Panc1 (cell line): ENCODE measurements at regions of chr17 and their contacts with region 1.

Region 1: GRCh38 chr17:31926100-31926729 is 10.6 kb upstream of the SUZ12 start:
- DNase-seq: no peak
- ATAC-seq: no peak
- H3K4me3 ChIP-seq: no peak overlapping the region
- H3K27ac ChIP-seq: no peak overlapping the region
- H3K4me1 ChIP-seq: no peaks in the 10 kb centered on the region
- H3K27me3 ChIP-seq: no peaks in the 10 kb centered on the region
- CTCF ChIP-seq: no peak

Region 2: DNA sequence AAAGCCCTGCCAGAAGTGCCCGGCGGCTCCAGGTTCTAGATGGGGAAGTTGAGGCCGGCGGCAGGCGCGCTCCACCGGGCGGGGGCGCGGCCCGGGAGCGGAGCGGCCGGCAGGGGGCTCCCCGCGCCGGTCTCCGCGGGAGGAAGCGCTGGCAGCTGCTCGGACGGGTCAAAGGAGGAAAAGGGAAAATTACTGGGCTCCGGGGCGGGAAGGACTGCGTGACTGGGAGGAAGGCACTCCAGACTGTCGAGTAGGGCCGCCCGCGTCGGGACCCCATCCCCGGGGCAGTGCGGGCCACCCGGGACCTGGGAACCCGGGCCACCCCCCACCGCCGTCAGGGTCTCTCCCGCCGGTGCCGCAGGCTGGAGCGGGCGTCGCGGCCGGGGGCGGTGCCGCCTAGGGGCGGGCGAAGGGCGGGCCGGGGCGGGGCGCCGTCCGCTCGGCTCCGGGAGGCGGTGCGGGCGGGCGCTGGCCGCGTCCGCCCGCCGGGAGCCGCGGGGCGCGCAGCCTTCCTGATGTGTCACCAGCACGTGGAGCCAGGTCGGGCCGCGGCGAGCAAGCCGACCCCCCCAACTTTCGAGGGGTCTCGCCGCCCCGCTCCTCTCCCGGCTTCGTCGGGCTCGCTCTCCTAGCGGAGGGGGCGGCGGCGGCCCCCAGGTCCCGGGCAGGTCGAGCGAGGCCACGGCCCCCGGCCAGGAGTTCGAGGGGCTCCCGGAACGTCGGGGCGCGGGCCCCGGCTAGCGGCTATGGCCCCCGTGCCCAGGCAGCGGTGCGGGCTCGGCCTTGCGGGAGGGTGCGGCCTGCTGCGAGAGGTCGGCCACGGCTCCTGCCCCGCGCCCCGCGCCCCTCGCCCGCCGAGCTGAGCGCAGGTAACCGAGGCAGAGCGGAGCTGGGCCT is 367.2 kb before region 1 on chr17:
- CTCF ChIA-PET with region 1: interaction called, 13 read pairs
- POLR2A ChIA-PET with region 1: no interaction called
- in situ Hi-C with region 1: no loop called
- intact Hi-C with region 1: no loop called
- DNase-seq: no peak
- ATAC-seq: peak; percentile 92
- H3K4me3 ChIP-seq: peak overlapping the region; percentile 69 to 85
- H3K27ac ChIP-seq: peak overlapping the region; percentile 88
- H3K4me1 ChIP-seq: peaks cover 30% of the 10 kb centered on the region
- H3K27me3 ChIP-seq: no peaks in the 10 kb centered on the region
- CTCF ChIP-seq: peak; percentile 98

Region 3: DNA sequence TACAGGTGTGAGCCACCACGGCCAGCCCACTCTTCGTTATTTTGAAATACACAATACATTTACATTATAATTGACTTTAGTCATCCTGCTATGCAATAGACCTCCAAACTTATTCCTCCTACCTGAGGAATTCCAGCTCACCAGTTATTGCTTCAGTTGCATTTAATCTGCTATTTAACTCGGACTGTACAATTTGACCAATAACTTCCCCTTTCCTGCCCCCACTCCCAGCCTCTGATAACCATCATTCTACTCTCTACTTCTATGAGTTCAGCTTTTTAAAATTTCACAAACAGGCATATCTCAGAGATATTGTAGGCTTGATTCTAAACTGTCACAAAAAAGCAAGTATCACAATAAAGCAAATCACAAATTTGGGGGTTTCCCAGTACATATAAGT is 224.2 kb before region 1 on chr17:
- CTCF ChIA-PET with region 1: no interaction called
- POLR2A ChIA-PET with region 1: interaction called, 14 read pairs
- in situ Hi-C with region 1: no loop called
- intact Hi-C with region 1: no loop called
- DNase-seq: no peak
- ATAC-seq: no peak
- H3K4me3 ChIP-seq: no peak overlapping the region
- H3K27ac ChIP-seq: no peak overlapping the region
- H3K4me1 ChIP-seq: no peaks in the 10 kb centered on the region
- H3K27me3 ChIP-seq: no peaks in the 10 kb centered on the region
- CTCF ChIP-seq: no peak

Region 4: DNA sequence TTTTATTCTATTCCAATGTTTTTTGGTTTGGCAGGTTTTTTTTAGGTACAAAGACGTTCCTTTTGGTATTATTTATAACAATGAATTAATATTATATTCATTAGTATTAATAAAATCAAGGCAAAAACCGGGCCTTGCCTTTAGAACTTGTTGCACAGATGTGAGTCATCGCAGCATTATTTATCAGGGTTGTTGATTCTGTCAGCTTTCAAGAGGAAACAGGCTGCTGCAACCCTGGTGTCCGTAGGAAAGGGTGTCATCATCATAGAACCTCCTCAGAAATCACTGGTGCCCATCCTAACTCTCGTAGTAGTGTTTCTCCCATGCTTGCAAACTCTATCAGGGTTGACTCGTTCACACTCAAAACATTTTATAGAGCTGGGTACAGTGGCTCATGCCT is 70.8 kb after region 1 on chr17:
- CTCF ChIA-PET with region 1: no interaction called
- POLR2A ChIA-PET with region 1: interaction called, 13 read pairs
- in situ Hi-C with region 1: no loop called
- intact Hi-C with region 1: no loop called
- DNase-seq: no peak
- ATAC-seq: no peak
- H3K4me3 ChIP-seq: no peak overlapping the region
- H3K27ac ChIP-seq: no peak overlapping the region
- H3K4me1 ChIP-seq: no peaks in the 10 kb centered on the region
- H3K27me3 ChIP-seq: no peaks in the 10 kb centered on the region
- CTCF ChIP-seq: no peak